ENCODE measurements at regions of chr3 and their contacts with region 1.

Region 1: GRCh38 chr3:102673271-102674115 is 238.7 kb downstream of the ZPLD1 start:
- DNase-seq: peak; percentile 5
- ATAC-seq: peak; percentile 86
- H3K4me3 ChIP-seq: no peak overlapping the region
- H3K27ac ChIP-seq: no peak overlapping the region
- H3K4me1 ChIP-seq: no peaks in the 10 kb centered on the region
- H3K27me3 ChIP-seq: no peaks in the 10 kb centered on the region; a peak in 1 of 4 replicates
- CTCF ChIP-seq: peak; percentile 75 to 90 (median 83); a peak in 5 of 6 replicates
- EP300 ChIP-seq: no peak
- POLR2A ChIP-seq: no peak
- RAD21 ChIP-seq: peak; percentile 96

Region 2: DNA sequence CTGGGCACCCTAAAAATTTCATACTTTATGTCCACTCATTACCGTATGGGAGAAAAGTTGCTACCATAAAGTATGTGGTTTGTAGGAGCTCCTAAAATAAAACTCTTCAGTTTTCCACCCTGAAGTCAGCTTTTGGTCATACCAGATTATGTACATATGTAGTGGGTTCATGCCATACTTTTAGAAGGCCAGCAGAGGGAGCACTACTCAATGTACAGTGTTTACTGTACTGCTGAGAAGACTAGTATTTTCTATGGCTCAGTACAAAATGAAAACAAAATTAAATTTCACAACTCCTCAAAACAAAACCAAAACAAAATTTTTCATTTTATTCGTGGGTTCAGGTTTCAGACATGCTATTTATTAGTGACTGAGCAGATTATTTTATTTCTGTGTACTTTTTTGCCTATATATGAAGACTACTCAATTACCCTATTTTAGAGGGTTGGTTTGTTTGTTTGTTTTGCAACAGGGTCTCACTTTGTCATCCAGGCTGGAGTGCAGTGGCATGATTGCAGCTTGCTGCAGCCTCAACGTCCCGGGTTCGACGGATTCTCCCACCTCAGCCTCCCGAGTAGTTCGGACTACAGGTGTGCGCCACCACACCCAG is 870.2 kb before region 1 on chr3:
- CTCF ChIA-PET with region 1: interaction called, 6 read pairs
- POLR2A ChIA-PET with region 1: no interaction called
- RAD21 ChIA-PET with region 1: no interaction called
- SMC1A ChIA-PET with region 1: interaction called, 3 read pairs
- in situ Hi-C with region 1: no loop called
- intact Hi-C with region 1: loop called (anchors 10 kb)
- DNase-seq: no peak
- ATAC-seq: peak; percentile 100
- H3K4me3 ChIP-seq: no peak overlapping the region
- H3K27ac ChIP-seq: no peak overlapping the region
- H3K4me1 ChIP-seq: peaks cover 11% of the 10 kb centered on the region
- H3K27me3 ChIP-seq: no peaks in the 10 kb centered on the region
- CTCF ChIP-seq: peak; percentile 78 to 88 (median 85)
- EP300 ChIP-seq: no peak
- POLR2A ChIP-seq: no peak
- RAD21 ChIP-seq: peak; percentile 70

Region 3: GRCh38 chr3:102129760-102130608 is 543.5 kb before region 1 on chr3:
- CTCF ChIA-PET with region 1: no interaction called
- POLR2A ChIA-PET with region 1: no interaction called
- RAD21 ChIA-PET with region 1: no interaction called
- SMC1A ChIA-PET with region 1: no interaction called
- in situ Hi-C with region 1: no loop called
- intact Hi-C with region 1: no loop called
- DNase-seq: no peak
- ATAC-seq: no peak; the same call in 2 of the 3 replicates
- H3K4me3 ChIP-seq: no peak overlapping the region
- H3K27ac ChIP-seq: no peak overlapping the region
- H3K4me1 ChIP-seq: no peaks in the 10 kb centered on the region
- H3K27me3 ChIP-seq: no peaks in the 10 kb centered on the region
- CTCF ChIP-seq: no peak
- EP300 ChIP-seq: no peak
- POLR2A ChIP-seq: no peak
- RAD21 ChIP-seq: no peak

Region 4: DNA sequence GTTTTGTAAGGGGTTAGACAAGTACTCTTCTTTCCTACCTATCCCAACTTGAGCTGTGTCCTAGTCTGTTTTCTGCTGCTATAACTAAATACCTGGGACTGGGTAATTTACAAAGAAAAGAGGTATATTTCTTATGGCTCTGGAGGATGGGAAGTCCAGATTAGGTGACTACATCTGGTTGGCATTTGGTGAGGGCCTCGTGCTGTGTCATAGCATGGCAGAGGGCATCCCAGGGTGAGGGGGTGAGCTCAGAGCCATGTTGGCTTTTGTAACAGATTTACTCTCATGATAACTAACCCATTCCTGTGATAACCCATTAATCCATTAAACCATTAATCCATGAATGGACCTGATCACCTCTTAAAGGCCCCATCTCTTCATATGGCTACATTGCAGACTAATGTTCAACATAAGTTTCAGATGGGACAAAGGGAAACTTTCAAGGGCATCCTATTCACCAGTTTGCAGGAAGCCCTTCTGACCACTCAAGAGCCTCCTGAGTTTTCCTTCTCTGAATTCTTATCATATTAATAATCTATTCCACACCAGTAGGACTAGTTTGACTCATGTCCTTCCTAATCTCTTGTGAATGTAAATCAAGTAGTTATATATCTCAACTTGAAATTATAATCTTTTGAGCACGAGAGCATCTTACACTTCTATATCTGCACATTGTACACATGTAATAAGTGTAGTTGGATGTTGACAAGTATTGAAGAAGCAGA is 424.4 kb before region 1 on chr3:
- CTCF ChIA-PET with region 1: no interaction called
- POLR2A ChIA-PET with region 1: no interaction called
- RAD21 ChIA-PET with region 1: no interaction called
- SMC1A ChIA-PET with region 1: no interaction called
- in situ Hi-C with region 1: no loop called
- intact Hi-C with region 1: no loop called
- DNase-seq: no peak
- ATAC-seq: no peak
- H3K4me3 ChIP-seq: no peak overlapping the region
- H3K27ac ChIP-seq: no peak overlapping the region
- H3K4me1 ChIP-seq: no peaks in the 10 kb centered on the region
- H3K27me3 ChIP-seq: no peaks in the 10 kb centered on the region
- CTCF ChIP-seq: no peak
- EP300 ChIP-seq: no peak
- POLR2A ChIP-seq: no peak
- RAD21 ChIP-seq: no peak

Region 5: GRCh38 chr3:102544741-102545140 is 128.8 kb before region 1 on chr3:
- CTCF ChIA-PET with region 1: no interaction called
- POLR2A ChIA-PET with region 1: no interaction called
- RAD21 ChIA-PET with region 1: no interaction called
- SMC1A ChIA-PET with region 1: no interaction called
- in situ Hi-C with region 1: no loop called
- intact Hi-C with region 1: no loop called
- DNase-seq: no peak
- ATAC-seq: no peak
- H3K4me3 ChIP-seq: no peak overlapping the region
- H3K27ac ChIP-seq: no peak overlapping the region
- H3K4me1 ChIP-seq: no peaks in the 10 kb centered on the region
- H3K27me3 ChIP-seq: peaks cover 0 to 4% of the 10 kb centered on the region in 2 experiments; a peak in 1 of 4 replicates
- CTCF ChIP-seq: no peak
- EP300 ChIP-seq: no peak
- POLR2A ChIP-seq: no peak
- RAD21 ChIP-seq: no peak

Region 6: DNA sequence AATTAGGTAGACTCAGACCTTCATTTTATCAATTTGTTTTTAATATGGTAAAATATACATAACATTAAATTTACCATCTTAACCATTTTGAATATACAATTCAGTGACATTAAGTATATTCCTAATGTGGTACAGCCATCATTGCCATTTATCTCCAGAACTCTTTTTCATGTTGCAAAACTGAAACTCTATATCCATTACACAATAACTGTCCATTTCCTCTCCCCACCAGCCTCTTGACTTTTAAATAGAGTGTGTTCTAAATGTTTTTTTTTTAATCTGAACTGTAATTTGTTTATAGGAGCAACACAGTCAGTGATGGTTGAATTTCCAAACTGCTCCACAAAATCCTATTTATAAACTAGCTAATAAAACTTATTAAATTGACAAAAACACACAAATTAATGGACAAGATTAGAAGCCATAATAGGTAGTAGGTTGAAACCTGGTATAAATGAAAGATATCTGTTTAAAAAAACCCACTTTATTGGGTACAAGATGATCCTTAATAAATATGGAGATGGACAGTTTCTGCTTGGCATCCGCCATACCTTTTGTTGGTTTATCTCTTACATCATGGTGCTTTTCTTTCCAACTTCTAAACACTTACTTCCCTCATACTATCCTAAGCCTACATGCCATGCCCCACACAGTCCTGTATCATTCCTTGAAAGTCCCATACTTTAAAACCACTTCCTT is 96.3 kb before region 1 on chr3:
- CTCF ChIA-PET with region 1: no interaction called
- POLR2A ChIA-PET with region 1: no interaction called
- RAD21 ChIA-PET with region 1: no interaction called
- SMC1A ChIA-PET with region 1: no interaction called
- in situ Hi-C with region 1: no loop called
- intact Hi-C with region 1: no loop called
- DNase-seq: no peak
- ATAC-seq: no peak
- H3K4me3 ChIP-seq: no peak overlapping the region
- H3K27ac ChIP-seq: no peak overlapping the region
- H3K4me1 ChIP-seq: no peaks in the 10 kb centered on the region
- H3K27me3 ChIP-seq: no peaks in the 10 kb centered on the region
- CTCF ChIP-seq: no peak
- EP300 ChIP-seq: no peak
- POLR2A ChIP-seq: no peak
- RAD21 ChIP-seq: no peak

Region 7: GRCh38 chr3:102699819-102700140 is 26.3 kb after region 1 on chr3:
- CTCF ChIA-PET with region 1: interaction called, 6 read pairs
- POLR2A ChIA-PET with region 1: no interaction called
- RAD21 ChIA-PET with region 1: interaction called, 3 read pairs
- SMC1A ChIA-PET with region 1: interaction called, 10 read pairs
- in situ Hi-C with region 1: no loop called
- intact Hi-C with region 1: no loop called
- DNase-seq: no peak
- ATAC-seq: no peak
- H3K4me3 ChIP-seq: no peak overlapping the region
- H3K27ac ChIP-seq: no peak overlapping the region
- H3K4me1 ChIP-seq: no peaks in the 10 kb centered on the region
- H3K27me3 ChIP-seq: no peaks in the 10 kb centered on the region
- CTCF ChIP-seq: no peak
- EP300 ChIP-seq: no peak
- POLR2A ChIP-seq: no peak
- RAD21 ChIP-seq: no peak

Region 8: DNA sequence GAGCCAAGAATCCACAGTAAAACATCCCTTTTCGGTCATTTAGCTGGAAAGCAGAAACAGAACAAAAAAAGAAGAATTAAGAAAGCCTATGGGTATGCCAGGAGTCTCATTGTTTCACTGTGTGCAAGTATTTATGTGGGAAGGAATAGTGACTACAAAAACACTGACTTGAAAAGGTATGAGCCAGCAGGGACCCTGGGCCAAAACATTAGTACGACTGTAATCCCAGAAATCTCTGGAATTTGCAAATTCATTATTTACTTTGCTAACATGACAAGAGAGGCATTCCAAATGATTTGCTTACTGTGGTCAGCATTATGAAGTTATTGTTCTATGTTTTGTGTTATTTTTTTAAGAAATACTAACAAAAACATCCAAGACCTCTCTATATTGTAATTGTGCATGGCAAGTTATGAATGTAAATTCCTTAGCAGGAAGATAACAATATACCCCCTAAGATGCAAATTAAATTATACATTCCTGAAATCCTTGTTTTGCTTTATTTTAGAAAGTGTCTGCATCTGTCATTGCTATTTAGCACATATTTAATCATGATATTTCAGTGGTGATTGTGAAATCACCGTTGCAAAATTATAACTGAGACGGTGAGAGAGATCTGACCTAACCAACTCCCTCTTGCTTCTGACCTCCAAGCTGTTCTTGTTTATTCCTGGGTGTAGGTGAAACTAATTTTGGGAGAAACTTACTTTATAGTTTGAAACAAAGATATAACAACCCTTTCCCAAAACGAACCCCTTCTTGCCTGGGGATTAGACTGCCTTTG is 60.5 kb after region 1 on chr3:
- CTCF ChIA-PET with region 1: interaction called, 180 read pairs
- POLR2A ChIA-PET with region 1: no interaction called
- RAD21 ChIA-PET with region 1: interaction called, 3 read pairs
- SMC1A ChIA-PET with region 1: interaction called, 122 read pairs
- in situ Hi-C with region 1: no loop called
- intact Hi-C with region 1: no loop called
- DNase-seq: no peak
- ATAC-seq: no peak
- H3K4me3 ChIP-seq: no peak overlapping the region
- H3K27ac ChIP-seq: no peak overlapping the region
- H3K4me1 ChIP-seq: no peaks in the 10 kb centered on the region
- H3K27me3 ChIP-seq: no peaks in the 10 kb centered on the region
- CTCF ChIP-seq: no peak
- EP300 ChIP-seq: no peak
- POLR2A ChIP-seq: no peak
- RAD21 ChIP-seq: no peak

Region 9: DNA sequence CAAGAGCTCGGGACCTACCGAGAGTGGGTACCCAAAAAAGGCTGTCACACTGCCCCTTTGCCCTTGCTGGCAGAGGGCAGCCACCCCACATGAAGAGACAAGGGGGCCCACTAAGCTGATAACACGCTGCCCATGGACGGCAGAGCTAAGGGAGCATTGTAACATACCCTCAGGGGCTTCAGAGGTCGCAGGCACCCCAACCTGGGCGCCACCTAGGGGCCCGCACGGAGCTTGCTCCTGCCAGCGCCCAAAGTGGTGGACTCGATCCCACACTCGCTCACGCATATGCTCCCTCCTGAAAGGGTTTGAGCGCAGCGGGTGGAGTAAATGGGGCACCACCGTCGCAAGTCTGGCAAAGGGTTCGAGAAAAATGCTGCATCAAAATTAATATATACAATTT is 736.7 kb after region 1 on chr3:
- CTCF ChIA-PET with region 1: interaction called, 3 read pairs
- POLR2A ChIA-PET with region 1: no interaction called
- RAD21 ChIA-PET with region 1: no interaction called
- SMC1A ChIA-PET with region 1: no interaction called
- in situ Hi-C with region 1: no loop called
- intact Hi-C with region 1: loop called (anchors 5 kb)
- DNase-seq: no peak
- ATAC-seq: peak; percentile 61
- H3K4me3 ChIP-seq: no peak overlapping the region
- H3K27ac ChIP-seq: no peak overlapping the region
- H3K4me1 ChIP-seq: no peaks in the 10 kb centered on the region
- H3K27me3 ChIP-seq: no peaks in the 10 kb centered on the region
- CTCF ChIP-seq: peak; percentile 21 to 44 (median 27); a peak in 3 of 6 replicates
- EP300 ChIP-seq: no peak
- POLR2A ChIP-seq: no peak
- RAD21 ChIP-seq: 0 out of 2 replicates have a peak, but pooled peaks have one; percentile 24